ENCODE measurements at regions of chr1 and their contacts with region 1.

Region 1: GRCh38 chr1:40404670-40405462 is 31.3 kb downstream of the SMAP2 start:
- DNase-seq: peak; percentile 62
- H3K4me3 Mint-ChIP-seq: peak overlapping the region; percentile 41
- H3K27ac Mint-ChIP-seq: peak overlapping the region; percentile 94
- H3K4me1 Mint-ChIP-seq: peaks cover 71% of the 10 kb centered on the region
- H3K27me3 Mint-ChIP-seq: no peaks in the 10 kb centered on the region

Region 2: DNA sequence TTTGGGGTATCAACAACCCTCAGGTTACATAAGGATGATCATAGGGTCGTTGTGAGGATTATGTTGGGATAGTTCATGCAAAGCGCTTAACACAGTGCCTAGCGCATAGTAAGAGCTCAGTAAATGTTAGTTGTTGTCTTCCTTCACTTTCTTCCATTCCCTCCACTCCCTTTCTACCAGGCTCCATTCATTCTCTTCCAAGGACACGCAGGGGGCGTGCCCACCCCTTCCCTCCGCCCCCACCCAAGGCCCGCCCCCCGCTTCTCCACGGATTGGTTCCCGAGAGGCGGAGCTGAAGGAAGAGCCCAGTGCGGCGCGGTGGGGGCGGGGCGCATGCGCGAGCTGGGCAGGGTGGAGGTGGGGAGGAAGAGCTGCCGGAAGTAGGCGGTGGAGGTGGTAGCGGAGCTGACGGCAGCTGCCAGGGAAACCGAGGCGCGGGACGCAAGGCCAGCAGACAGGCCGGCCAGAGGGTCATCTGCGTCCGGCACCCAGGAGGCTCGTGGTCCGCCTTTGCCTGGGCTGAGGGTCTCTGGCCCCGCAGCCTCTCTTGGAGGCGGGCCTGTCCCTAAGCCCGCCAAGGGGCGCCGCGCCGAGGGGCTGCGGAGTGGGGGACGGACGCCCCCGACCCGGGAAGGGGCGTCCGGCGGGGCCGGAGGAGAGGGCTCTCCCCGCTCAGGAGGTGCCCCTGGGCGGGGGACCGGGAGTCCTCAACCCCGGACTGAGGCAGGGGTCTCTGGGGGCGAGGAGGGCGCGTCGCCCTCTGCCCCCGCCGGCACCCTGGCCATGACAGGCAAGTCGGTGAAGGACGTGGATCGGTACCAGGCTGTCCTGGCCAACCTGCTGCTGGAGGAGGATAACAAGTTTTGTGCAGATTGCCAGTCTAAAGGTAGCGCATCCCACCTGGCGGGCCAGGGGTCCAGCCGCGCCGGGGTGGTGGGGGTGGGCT is 31.3 kb before region 1 on chr1 and contains the start of gene SMAP2:
- CTCF ChIA-PET with region 1: interaction called, 9 read pairs
- intact Hi-C with region 1: loop called (anchors 5 kb)
- DNase-seq: peak; percentile 97
- H3K4me3 Mint-ChIP-seq: peak within 1 kb of the TSS; percentile 98
- H3K27ac Mint-ChIP-seq: peak within 1 kb of the TSS; percentile 99
- H3K4me1 Mint-ChIP-seq: peaks cover 46% of the 10 kb centered on the region
- H3K27me3 Mint-ChIP-seq: no peaks in the 10 kb centered on the region
- total RNA-seq, gene SMAP2: 390 to 391 TPM

Region 3: DNA sequence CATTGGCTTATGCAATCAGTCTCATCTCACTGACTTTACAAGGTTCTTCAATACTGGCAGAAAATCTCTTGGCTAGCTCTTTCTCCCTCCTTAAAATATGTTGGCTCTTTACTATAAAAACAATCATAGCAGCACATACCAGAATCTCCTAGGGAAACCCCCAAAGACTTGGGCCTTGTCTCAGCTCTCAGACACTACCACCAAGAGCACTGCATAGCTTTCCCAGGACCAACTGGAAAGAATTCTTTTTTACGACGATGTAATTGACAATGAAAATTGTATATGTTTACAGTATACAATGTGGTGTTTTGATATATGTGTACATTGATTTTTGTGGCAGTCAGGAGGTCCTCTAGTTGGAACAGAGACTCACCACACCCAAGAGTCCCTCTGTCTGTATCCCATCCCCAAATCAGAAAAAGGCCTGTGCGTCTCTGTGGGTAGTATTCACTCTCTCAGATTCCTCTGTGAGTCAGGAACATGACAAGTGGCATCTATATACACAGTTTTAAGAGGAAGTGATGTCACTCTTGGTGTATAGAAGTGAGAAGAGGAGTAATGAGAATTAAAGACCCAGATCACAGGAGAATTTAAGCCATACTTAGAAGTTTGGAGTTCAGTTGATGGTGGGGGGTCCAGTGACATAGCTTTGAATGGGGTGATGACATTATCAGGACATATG is 10.2 kb before region 1 on chr1:
- CTCF ChIA-PET with region 1: interaction called, 5 read pairs
- intact Hi-C with region 1: loop called (anchors 1 kb)
- DNase-seq: peak; percentile 79
- H3K4me3 Mint-ChIP-seq: peak overlapping the region; percentile 48
- H3K27ac Mint-ChIP-seq: peak overlapping the region; percentile 95
- H3K4me1 Mint-ChIP-seq: peaks cover 90% of the 10 kb centered on the region
- H3K27me3 Mint-ChIP-seq: no peaks in the 10 kb centered on the region

Region 4: GRCh38 chr1:40454873-40455272 is 50.0 kb after region 1 on chr1:
- CTCF ChIA-PET with region 1: no interaction called
- intact Hi-C with region 1: no loop called
- DNase-seq: no peak
- H3K4me3 Mint-ChIP-seq: no peak overlapping the region
- H3K27ac Mint-ChIP-seq: peak overlapping the region; percentile 77
- H3K4me1 Mint-ChIP-seq: peaks cover 27% of the 10 kb centered on the region
- H3K27me3 Mint-ChIP-seq: no peaks in the 10 kb centered on the region